ENCODE measurements at regions of chr17 and their contacts with region 1.

Region 1: DNA sequence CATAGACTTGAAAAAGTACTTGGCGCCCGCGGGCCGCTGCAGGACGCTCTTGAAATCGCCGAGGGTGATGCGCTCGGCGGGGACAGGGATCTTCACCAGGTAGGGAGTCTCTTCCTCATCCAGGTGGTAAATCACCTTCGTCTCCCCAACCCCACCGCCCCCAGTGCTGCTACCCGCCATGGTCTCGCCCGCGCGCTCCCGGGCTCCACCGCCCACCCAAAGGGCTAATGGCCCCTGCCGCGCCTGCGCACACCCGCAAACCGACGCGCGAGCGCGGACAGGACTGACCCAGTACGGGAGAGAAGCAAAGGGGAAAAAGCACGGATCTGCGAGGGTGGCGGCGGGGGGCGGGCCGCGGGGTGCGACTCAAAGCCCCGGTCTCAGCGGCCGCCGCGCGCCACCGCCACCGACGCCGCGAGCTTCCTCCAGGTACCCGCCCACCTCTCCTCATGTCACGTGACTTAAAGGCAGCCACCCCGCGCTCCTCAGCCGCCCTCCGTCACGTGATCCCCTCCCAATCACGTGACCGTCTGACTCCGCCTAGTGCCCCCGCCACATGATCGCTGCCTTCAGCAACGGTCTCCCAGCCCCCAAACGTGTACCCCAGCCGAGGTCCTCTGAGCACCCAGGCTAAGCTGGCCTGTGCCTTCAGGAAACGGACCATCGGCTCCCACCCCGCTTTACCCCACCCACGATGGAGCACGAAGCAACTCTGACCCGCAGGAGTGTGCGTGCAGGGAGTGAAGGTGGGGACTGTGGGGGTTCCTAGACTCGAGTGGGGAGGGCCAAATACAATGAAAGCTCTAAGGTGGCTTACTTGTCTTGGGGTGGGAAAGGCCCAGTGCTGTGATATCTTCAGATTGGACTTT is at the start of gene DVL2:
- DNase-seq: peak; percentile 92
- H3K4me3 Mint-ChIP-seq: peak within 1 kb of the TSS; percentile 91
- H3K27ac Mint-ChIP-seq: peak within 1 kb of the TSS; percentile 94
- H3K4me1 Mint-ChIP-seq: peaks cover 30% of the 10 kb centered on the region
- H3K27me3 Mint-ChIP-seq: no peaks in the 10 kb centered on the region
- CTCF ChIP-seq: no peak
- total RNA-seq, gene DVL2: 34.9 and 37.4 TPM in 2 replicates

Region 2: DNA sequence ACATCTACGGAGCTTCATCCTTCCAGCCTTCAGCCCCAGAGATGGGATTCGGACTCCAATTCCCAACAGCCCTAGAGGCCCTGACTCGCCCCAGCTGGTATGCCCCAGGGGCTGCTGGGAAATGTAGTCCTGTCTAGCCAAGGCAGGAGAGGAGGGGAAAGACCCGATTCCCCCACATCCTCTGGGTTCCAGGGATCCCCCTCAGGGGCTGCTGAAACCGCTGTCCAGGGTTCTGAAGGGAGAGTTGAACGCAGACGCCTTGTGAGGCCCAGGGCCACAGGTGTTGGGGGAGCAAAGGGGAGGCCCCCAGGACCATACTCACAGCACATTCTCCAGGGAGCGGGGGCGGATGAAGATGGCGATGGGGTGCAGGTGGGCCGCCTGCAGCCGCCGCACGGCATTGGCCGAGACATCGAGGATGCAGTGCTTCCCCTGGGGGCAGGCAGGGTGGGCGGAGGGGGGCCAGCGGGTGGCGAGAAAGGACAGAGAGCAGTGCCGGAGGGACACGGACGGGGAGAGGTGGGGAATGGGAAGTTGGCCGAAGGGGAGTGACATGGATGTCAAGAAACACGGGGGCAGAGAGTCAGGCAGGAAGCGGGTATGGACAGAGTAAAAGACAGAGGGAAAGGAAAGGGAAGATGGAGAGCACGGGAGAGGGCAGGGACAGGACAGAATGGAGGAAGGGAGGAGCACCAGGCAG is 42.6 kb before region 1 on chr17:
- CTCF ChIA-PET with region 1: no interaction called
- POLR2A ChIA-PET with region 1: no interaction called
- intact Hi-C with region 1: no loop called
- DNase-seq: peak; percentile 35
- H3K4me3 Mint-ChIP-seq: no peak overlapping the region
- H3K27ac Mint-ChIP-seq: no peak overlapping the region
- H3K4me1 Mint-ChIP-seq: peaks cover under 1% of the 10 kb centered on the region
- H3K27me3 Mint-ChIP-seq: no peaks in the 10 kb centered on the region
- CTCF ChIP-seq: no peak

Region 3: GRCh38 chr17:7252176-7253043 is 18.1 kb after region 1 on chr17 and contains the start of gene ELP5:
- CTCF ChIA-PET with region 1: interaction called, 4 read pairs
- POLR2A ChIA-PET with region 1: interaction called, 128 read pairs
- intact Hi-C with region 1: no loop called
- DNase-seq: peak; percentile 94
- H3K4me3 Mint-ChIP-seq: peak within 1 kb of the TSS; percentile 92
- H3K27ac Mint-ChIP-seq: peak within 1 kb of the TSS; percentile 99
- H3K4me1 Mint-ChIP-seq: peaks cover 25% of the 10 kb centered on the region
- H3K27me3 Mint-ChIP-seq: no peaks in the 10 kb centered on the region
- CTCF ChIP-seq: no peak
- total RNA-seq, gene ELP5: 81.0 and 91.3 TPM in 2 replicates

Region 4: DNA sequence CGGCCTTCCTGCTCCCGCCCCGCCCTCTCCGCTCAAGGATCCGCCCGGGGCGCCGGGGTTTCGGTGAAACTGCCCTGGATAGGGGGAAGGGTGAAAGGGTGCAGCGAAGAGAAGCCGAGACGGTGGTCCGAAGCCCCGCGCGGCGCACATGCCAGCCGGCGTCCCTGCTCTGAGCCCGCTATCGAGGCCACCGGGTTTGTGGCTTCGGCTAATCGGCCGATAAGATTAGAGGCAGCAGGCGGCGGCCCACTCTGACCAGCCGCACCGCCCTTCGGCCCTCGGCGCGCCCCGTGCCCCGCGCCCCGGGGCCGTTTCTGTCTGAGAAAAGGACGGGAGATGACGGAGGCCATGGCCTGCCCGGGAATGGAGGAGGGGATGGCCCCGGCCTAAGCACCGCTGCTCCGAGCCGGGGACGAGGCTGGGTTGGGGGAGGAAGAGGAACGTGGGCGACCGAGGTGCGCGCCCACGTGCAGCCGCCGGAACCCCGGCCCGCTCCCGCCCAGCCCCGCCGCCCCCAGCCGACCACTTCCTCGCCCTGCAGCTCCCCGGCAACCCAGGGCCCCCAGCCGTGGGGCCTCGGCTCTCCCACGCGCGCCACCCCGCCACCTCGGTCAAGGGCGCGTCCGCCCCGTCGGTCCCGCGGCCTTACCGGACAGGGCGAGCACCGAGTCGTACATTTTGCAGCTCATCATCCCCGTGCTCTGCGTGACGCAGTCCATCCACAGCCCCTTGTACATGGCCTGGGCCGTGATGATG is 27.0 kb after region 1 on chr17:
- CTCF ChIA-PET with region 1: no interaction called
- POLR2A ChIA-PET with region 1: interaction called, 92 read pairs
- intact Hi-C with region 1: no loop called
- DNase-seq: peak; percentile 87
- H3K4me3 Mint-ChIP-seq: peak overlapping the region; percentile 73
- H3K27ac Mint-ChIP-seq: peak overlapping the region; percentile 79
- H3K4me1 Mint-ChIP-seq: peaks cover 36% of the 10 kb centered on the region
- H3K27me3 Mint-ChIP-seq: no peaks in the 10 kb centered on the region
- CTCF ChIP-seq: no peak

Measured in MCF 10A (cell line).